Activated CD4-positive, alpha-beta T cell treated with anti-CD3 and anti-CD28 coated beads for 36 hours (primary cell): ENCODE measurements at regions of chr15 and their contacts with region 1.

Region 1: GRCh38 chr15:45402162-45402954 is 24.0 kb upstream of the GATM start:
- DNase-seq: peak; percentile 97
- ATAC-seq: peak; percentile 97
- H3K4me3 Mint-ChIP-seq: peak overlapping the region; percentile 98
- H3K27ac Mint-ChIP-seq: peak overlapping the region; percentile 98
- H3K4me1 Mint-ChIP-seq: peaks cover 32% of the 10 kb centered on the region
- H3K27me3 Mint-ChIP-seq: no peaks in the 10 kb centered on the region

Region 2: DNA sequence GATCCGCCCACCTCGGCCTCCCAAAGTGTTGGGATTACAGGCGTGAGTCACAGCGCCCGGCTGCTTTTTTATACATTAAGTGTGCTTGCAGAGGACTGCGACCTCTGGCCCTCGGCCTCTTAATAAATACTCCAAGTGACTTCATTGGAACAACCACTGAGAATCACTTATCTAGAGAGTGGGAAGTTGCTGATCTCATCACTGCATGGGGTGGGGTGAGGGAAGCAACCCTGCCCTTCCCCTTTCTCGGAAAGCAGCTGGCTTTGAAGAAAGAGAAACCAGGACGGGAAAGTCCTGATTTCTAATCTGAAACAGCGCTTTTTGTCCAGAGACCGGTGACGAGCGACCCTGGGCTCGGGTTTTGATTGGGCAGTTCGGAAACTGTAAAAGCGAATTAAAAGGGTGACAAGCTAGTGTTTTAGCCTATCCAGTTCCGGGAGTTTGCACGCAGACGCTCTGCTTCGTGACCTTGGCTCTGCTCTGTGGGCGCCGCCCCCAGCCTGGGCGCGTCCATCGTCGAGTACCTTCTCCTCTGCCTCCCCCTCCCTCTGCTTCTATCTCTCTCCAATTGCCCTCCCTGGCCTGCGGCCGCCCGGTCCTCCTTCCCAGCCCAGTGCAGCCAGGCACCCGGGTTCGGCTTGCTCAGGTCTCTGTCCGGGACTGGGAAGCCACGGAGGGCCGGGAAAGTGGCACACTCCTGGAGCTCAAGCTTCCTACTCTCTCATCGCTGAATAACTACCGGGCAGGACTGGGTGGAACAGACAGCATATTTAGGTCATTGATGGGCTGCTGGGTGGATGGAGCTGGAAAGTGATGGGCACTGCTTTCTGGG is 673.6 kb before region 1 on chr15:
- CTCF ChIA-PET with region 1: no interaction called
- POLR2A ChIA-PET with region 1: no interaction called
- intact Hi-C with region 1: loop called in 1 of 2 experiments (anchors 5 kb)
- DNase-seq: peak; percentile 96
- ATAC-seq: peak; percentile 78
- H3K4me3 Mint-ChIP-seq: peak overlapping the region; percentile 91
- H3K27ac Mint-ChIP-seq: peak overlapping the region; percentile 99
- H3K4me1 Mint-ChIP-seq: peaks cover 68% of the 10 kb centered on the region
- H3K27me3 Mint-ChIP-seq: no peaks in the 10 kb centered on the region

Region 3: DNA sequence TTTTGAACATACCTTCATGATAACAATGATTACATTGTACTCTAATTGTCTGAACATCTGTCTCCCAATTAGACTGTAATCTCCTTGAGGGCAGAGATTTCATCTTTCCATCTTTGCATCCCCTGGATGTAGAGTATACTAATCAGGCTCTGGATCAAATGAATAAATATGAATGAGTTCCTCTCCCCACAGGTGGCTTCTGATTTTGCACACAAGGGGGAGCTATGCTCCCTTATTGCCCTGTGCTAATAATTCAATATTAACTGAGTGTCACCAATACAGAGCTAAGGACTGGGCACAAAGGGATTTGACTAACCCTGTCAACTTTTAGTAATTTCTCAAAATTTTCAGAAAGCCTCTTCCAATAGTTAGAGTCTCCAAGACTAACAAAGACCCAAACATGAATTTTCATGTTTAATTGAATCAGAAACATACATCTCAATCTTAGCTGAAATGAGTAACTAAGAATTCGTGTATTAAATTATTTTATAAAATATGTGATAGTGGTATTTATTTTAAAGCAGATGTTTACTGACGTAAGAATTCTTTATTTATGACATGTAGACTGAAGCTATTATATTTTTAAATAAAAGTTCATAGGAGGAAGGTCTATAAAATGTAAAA is 275.7 kb before region 1 on chr15:
- CTCF ChIA-PET with region 1: interaction called, 5 read pairs
- POLR2A ChIA-PET with region 1: no interaction called
- intact Hi-C with region 1: loop called in 1 of 2 experiments (anchors 2 kb)
- DNase-seq: peak; percentile 51
- ATAC-seq: peak; percentile 50
- H3K4me3 Mint-ChIP-seq: no peak overlapping the region
- H3K27ac Mint-ChIP-seq: no peak overlapping the region
- H3K4me1 Mint-ChIP-seq: no peaks in the 10 kb centered on the region
- H3K27me3 Mint-ChIP-seq: peaks cover 43% of the 10 kb centered on the region

Region 4: GRCh38 chr15:45198337-45199135 is 203.8 kb before region 1 on chr15:
- CTCF ChIA-PET with region 1: interaction called, 48 read pairs
- POLR2A ChIA-PET with region 1: interaction called, 11 read pairs
- intact Hi-C with region 1: loop called (anchors 1 kb)
- DNase-seq: peak; percentile 94
- ATAC-seq: peak; percentile 63
- H3K4me3 Mint-ChIP-seq: no peak overlapping the region
- H3K27ac Mint-ChIP-seq: no peak overlapping the region
- H3K4me1 Mint-ChIP-seq: peaks cover 14% of the 10 kb centered on the region
- H3K27me3 Mint-ChIP-seq: no peaks in the 10 kb centered on the region

Region 5: DNA sequence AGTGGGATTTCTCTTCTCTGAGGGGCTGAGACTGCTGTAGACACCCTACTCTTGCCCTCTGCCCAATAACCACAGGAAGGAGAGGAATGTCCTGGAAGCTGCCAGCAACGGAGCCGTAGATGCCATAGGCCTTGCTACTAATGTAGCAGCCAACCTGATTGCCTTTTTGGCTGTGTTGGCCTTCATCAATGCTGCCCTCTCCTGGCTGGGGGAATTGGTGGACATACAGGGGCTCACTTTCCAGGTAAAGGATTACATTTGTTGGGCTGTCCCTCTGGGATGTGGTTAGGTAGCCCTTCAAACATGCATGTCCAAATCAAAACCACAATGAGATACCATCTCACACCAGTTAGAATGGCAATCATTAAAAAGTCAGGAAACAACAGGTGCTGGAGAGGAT is 134.2 kb before region 1 on chr15:
- CTCF ChIA-PET with region 1: no interaction called
- POLR2A ChIA-PET with region 1: no interaction called
- intact Hi-C with region 1: no loop called
- DNase-seq: peak; percentile 24
- ATAC-seq: no peak
- H3K4me3 Mint-ChIP-seq: no peak overlapping the region
- H3K27ac Mint-ChIP-seq: no peak overlapping the region
- H3K4me1 Mint-ChIP-seq: no peaks in the 10 kb centered on the region
- H3K27me3 Mint-ChIP-seq: no peaks in the 10 kb centered on the region

Region 6: GRCh38 chr15:45307230-45307924 is 95.0 kb before region 1 on chr15:
- CTCF ChIA-PET with region 1: interaction called, 3 read pairs
- POLR2A ChIA-PET with region 1: no interaction called
- intact Hi-C with region 1: loop called (anchors 1 kb)
- DNase-seq: no peak
- ATAC-seq: peak; percentile 42
- H3K4me3 Mint-ChIP-seq: peak overlapping the region; percentile 1
- H3K27ac Mint-ChIP-seq: no peak overlapping the region
- H3K4me1 Mint-ChIP-seq: peaks cover 8% of the 10 kb centered on the region
- H3K27me3 Mint-ChIP-seq: peaks cover 26% of the 10 kb centered on the region

Region 7: GRCh38 chr15:45391746-45392583 is 10.4 kb before region 1 on chr15:
- CTCF ChIA-PET with region 1: interaction called, 32 read pairs
- POLR2A ChIA-PET with region 1: interaction called, 3 read pairs
- intact Hi-C with region 1: no loop called
- DNase-seq: peak; percentile 17
- ATAC-seq: peak; percentile 74
- H3K4me3 Mint-ChIP-seq: no peak overlapping the region
- H3K27ac Mint-ChIP-seq: no peak overlapping the region
- H3K4me1 Mint-ChIP-seq: peaks cover 5% of the 10 kb centered on the region
- H3K27me3 Mint-ChIP-seq: no peaks in the 10 kb centered on the region

Region 8: DNA sequence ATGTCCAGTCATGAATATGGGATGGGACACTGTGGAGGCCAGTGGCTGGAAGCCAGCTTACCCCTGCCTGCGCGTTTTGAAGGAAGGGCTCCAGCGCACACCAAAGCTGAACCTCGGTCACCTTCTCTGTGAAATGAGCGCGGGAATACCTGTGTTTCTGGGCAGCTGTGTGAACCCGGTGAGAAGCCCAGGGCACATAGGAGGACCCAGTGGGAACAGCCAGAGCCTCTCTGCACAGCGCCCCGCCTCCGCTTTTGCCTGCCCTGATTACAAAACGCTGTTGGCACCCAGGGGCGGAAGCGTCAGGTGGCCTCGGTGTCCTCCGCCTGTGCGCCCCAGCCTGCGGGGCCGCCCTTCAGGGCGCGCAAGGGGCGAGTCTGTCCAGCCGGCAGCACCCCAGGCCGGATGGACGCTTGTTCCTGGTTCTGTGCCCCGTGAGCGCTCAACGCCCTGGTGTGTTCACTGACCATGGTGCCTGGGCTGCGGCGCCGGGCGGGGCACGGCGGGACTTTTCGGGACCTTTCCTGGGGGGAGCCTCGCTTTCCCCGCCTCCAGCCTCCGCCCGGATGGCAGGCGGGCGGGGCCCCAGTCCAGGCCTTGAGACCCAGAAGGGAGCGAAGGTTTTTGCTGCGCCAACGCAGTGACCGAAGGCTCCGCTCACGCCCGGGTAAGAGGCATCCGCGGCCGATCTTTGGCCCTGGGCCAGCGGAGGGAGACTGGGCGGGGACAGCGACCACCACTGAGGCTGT is 232.3 kb after region 1 on chr15 and contains the start of gene SQOR:
- CTCF ChIA-PET with region 1: no interaction called
- POLR2A ChIA-PET with region 1: no interaction called
- intact Hi-C with region 1: no loop called
- DNase-seq: peak; percentile 86
- ATAC-seq: peak; percentile 66
- H3K4me3 Mint-ChIP-seq: peak within 1 kb of the TSS; percentile 96
- H3K27ac Mint-ChIP-seq: peak within 1 kb of the TSS; percentile 90
- H3K4me1 Mint-ChIP-seq: peaks cover 32% of the 10 kb centered on the region
- H3K27me3 Mint-ChIP-seq: no peaks in the 10 kb centered on the region
- total RNA-seq, gene SQOR: 105 to 108 TPM